ENCODE measurements at regions of chr2 and their contacts with region 1.

Region 1: GRCh38 chr2:217713395-217714286 is 289.2 kb downstream of the TNS1 start:
- DNase-seq: peak; percentile 59
- H3K4me3 ChIP-seq: no peak overlapping the region
- H3K27ac ChIP-seq: no peak overlapping the region
- H3K4me1 ChIP-seq: peaks cover 26% of the 10 kb centered on the region
- H3K27me3 ChIP-seq: no peaks in the 10 kb centered on the region
- CTCF ChIP-seq: peak; percentile 95 to 98

Region 2: GRCh38 chr2:216519154-216519762 is 1194.4 kb before region 1 on chr2:
- CTCF ChIA-PET with region 1: no interaction called
- dilution Hi-C with region 1: no loop called
- in situ Hi-C with region 1: loop called in 1 of 2 experiments (anchors 25 kb)
- intact Hi-C with region 1: loop called (anchors 2 kb)
- DNase-seq: peak; percentile 70
- H3K4me3 ChIP-seq: no peak overlapping the region
- H3K27ac ChIP-seq: no peak overlapping the region
- H3K4me1 ChIP-seq: peaks cover 15% of the 10 kb centered on the region
- H3K27me3 ChIP-seq: no peaks in the 10 kb centered on the region
- CTCF ChIP-seq: peak; percentile 72 to 78

Region 3: GRCh38 chr2:216777650-216778273 is 935.9 kb before region 1 on chr2:
- CTCF ChIA-PET with region 1: no interaction called
- dilution Hi-C with region 1: no loop called
- in situ Hi-C with region 1: no loop called
- intact Hi-C with region 1: loop called (anchors 1 kb)
- DNase-seq: peak; percentile 76
- H3K4me3 ChIP-seq: no peak overlapping the region
- H3K27ac ChIP-seq: no peak overlapping the region
- H3K4me1 ChIP-seq: peaks cover 13% of the 10 kb centered on the region
- H3K27me3 ChIP-seq: no peaks in the 10 kb centered on the region
- CTCF ChIP-seq: peak; percentile 96 to 97

Region 4: DNA sequence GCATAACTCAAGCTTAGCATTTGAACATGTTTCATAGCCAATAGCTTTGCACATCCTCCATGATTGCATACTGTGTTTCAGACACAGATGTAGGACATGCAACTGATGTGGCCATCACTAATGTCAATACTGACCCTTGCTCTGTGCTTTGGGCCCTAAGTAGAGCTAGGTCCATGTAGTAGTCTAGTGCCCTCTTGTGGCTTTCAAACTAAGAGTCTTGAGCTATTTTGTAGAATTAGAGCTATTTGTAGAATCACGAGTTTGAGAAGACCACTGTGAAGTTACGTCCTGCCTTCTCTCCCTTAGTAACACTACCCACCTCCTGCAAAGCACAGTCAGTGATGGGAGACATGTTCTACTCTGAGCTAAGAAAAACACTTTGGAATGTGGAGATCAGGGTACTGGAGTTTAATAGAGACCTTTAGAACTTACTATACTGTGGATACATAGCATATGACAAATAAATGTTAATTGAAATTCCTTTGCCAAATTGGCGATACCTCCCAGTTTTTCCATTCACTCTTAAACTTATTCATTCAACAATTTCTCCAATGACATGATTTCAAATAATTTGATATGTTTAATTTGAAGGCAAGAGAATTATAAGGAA is 547.3 kb before region 1 on chr2:
- CTCF ChIA-PET with region 1: no interaction called
- dilution Hi-C with region 1: no loop called
- in situ Hi-C with region 1: loop called in 1 of 2 experiments (anchors 25 kb)
- intact Hi-C with region 1: loop called (anchors 2 kb)
- DNase-seq: peak; percentile 27
- H3K4me3 ChIP-seq: no peak overlapping the region
- H3K27ac ChIP-seq: no peak overlapping the region
- H3K4me1 ChIP-seq: peaks cover 8% of the 10 kb centered on the region
- H3K27me3 ChIP-seq: no peaks in the 10 kb centered on the region
- CTCF ChIP-seq: peak; percentile 57 to 69

Region 5: DNA sequence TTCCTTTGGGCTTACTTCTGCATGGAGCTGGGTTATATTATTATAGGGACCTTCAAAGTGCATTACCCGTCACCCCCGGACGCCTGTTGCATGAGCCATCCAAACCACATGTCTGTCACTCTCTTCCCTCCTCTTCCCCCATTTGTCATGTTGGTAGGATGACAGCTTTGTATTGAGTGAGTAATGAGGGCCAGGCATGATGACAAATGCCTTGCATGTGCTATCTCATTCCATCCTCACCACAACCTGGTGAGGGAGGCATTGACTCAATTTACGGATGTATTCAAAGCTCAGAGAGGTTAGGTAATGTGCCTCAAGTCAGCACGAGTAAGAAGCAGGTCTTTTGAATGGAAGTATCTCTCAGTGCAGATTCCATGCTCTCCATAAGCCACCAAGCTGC is 343.2 kb before region 1 on chr2:
- CTCF ChIA-PET with region 1: interaction called, 6 read pairs
- dilution Hi-C with region 1: no loop called
- in situ Hi-C with region 1: no loop called
- intact Hi-C with region 1: loop called (anchors 1 kb)
- DNase-seq: peak; percentile 96
- H3K4me3 ChIP-seq: no peak overlapping the region
- H3K27ac ChIP-seq: no peak overlapping the region
- H3K4me1 ChIP-seq: peaks cover 37% of the 10 kb centered on the region
- H3K27me3 ChIP-seq: no peaks in the 10 kb centered on the region
- CTCF ChIP-seq: peak; percentile 16 to 51

Region 6: GRCh38 chr2:217775920-217776492 is 62.4 kb after region 1 on chr2:
- CTCF ChIA-PET with region 1: no interaction called
- dilution Hi-C with region 1: loop called (anchors 10 kb)
- in situ Hi-C with region 1: no loop called
- intact Hi-C with region 1: no loop called
- DNase-seq: no peak
- H3K4me3 ChIP-seq: no peak overlapping the region
- H3K27ac ChIP-seq: no peak overlapping the region
- H3K4me1 ChIP-seq: no peaks in the 10 kb centered on the region
- H3K27me3 ChIP-seq: peaks cover 2% of the 10 kb centered on the region
- CTCF ChIP-seq: no peak